ENCODE measurements at regions of chr2 and their contacts with region 1.

Region 1: DNA sequence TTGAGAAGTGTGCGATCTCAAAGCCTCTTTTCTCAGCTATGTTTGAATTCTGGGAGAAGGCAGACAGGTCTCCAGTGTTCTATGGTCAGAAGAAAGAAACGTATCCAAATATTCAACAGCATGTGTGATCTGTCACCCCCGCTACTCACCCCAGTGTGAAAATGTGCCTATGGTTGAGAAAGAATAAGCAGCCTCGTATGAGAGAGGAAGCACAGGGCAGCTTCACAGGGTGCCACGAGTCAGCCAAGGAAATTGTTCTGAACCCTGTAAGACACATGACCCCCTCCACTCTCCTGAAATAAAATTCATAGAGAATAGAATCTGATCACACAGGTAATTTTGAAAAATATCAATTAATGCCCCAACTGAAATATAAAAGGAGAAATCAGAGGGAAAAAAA is 8.0 kb upstream of the SF3B1 start:
- DNase-seq: no peak
- H3K4me3 Mint-ChIP-seq: no peak overlapping the region
- H3K27ac Mint-ChIP-seq: no peak overlapping the region
- H3K4me1 Mint-ChIP-seq: no peaks in the 10 kb centered on the region
- H3K27me3 Mint-ChIP-seq: no peaks in the 10 kb centered on the region
- CTCF ChIP-seq: no peak

Region 2: GRCh38 chr2:197453161-197453914 is 10.5 kb after region 1 on chr2 and contains the start of gene COQ10B:
- CTCF ChIA-PET with region 1: interaction called, 6 read pairs
- POLR2A ChIA-PET with region 1: interaction called, 257 read pairs
- intact Hi-C with region 1: no loop called
- DNase-seq: peak; percentile 99
- H3K4me3 Mint-ChIP-seq: peak within 1 kb of the TSS; percentile 99
- H3K27ac Mint-ChIP-seq: peak within 1 kb of the TSS; percentile 100
- H3K4me1 Mint-ChIP-seq: peaks cover 16% of the 10 kb centered on the region
- H3K27me3 Mint-ChIP-seq: no peaks in the 10 kb centered on the region
- CTCF ChIP-seq: no peak
- total RNA-seq, gene COQ10B: 21.3 and 22.8 TPM in 2 replicates

Region 3: GRCh38 chr2:197873293-197873701 is 430.4 kb after region 1 on chr2:
- CTCF ChIA-PET with region 1: no interaction called
- POLR2A ChIA-PET with region 1: no interaction called
- intact Hi-C with region 1: no loop called
- DNase-seq: peak; percentile 21
- H3K4me3 Mint-ChIP-seq: no peak overlapping the region
- H3K27ac Mint-ChIP-seq: no peak overlapping the region
- H3K4me1 Mint-ChIP-seq: peaks cover 21% of the 10 kb centered on the region
- H3K27me3 Mint-ChIP-seq: no peaks in the 10 kb centered on the region
- CTCF ChIP-seq: no peak